Breast epithelium (tissue), 4 donors: ENCODE measurements at regions of chr4 and their contacts with region 1.

Region 1: DNA sequence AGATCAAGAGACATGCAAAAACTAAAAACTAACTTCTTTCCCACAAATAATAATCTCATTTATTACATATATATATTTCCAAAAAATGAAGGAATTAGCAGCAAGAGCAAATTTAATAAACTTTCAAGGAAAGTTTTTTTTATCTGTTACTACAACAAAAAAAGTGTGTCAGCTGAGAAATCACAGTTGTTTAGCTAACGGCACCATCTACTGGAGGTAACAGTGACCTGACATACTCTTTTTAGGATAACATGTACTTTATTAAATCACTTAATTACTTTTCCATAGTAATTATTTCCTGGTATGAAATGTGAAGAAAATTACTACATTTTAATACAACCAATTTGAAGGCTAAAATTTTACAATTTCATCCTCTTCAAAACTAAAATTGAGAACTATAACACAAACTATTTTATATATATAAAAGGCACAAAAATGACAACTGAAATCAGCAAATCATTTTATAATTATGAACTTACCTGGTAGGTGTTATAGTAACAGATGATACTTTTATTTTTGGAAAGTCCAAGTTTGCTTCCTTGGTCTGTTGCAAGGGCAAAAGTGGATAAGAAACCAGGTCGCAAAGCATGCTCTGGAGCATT is 9.1 kb downstream of the LAMTOR3 start:
- DNase-seq: no peak
- H3K4me3 ChIP-seq: no peak overlapping the region
- H3K27ac ChIP-seq: no peak overlapping the region
- H3K4me1 ChIP-seq: no peaks in the 10 kb centered on the region
- H3K27me3 ChIP-seq: no peaks in the 10 kb centered on the region
- CTCF ChIP-seq: peak in 1 of 3 donors; percentile 27
- POLR2A ChIP-seq: no peak

Region 2: DNA sequence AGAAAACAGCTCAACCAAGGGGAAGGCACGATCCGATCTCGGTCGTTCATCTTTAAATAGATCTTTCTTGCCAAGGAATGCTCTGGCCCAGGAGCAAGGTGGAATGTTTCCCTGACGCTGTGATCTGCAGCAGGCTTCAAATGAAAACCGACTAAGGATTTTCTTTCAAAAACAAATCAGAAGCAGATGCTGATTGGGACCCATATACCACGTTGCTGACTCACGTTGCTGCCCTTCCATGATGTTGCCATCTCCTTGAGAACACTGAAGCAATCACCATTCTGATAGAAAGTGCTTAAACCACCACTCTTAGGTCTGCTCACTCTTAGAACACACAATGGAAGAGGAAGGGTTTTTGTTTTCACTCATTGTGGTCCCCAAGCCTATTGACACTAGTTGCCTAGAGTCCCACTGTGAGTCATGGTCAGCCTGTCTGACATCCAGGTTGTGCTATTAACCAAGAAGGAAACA is 17.0 kb before region 1 on chr4:
- intact Hi-C with region 1: loop called (anchors 1 kb)
- DNase-seq: no peak
- H3K4me3 ChIP-seq: no peak overlapping the region
- H3K27ac ChIP-seq: no peak overlapping the region
- H3K4me1 ChIP-seq: no peaks in the 10 kb centered on the region
- H3K27me3 ChIP-seq: no peaks in the 10 kb centered on the region
- CTCF ChIP-seq: no peak
- POLR2A ChIP-seq: no peak

Region 3: GRCh38 chr4:99927566-99927965 is 42.4 kb after region 1 on chr4:
- intact Hi-C with region 1: loop called (anchors 2 kb)
- DNase-seq: no peak
- H3K4me3 ChIP-seq: no peak overlapping the region
- H3K27ac ChIP-seq: no peak overlapping the region
- H3K4me1 ChIP-seq: no peaks in the 10 kb centered on the region
- H3K27me3 ChIP-seq: no peaks in the 10 kb centered on the region
- CTCF ChIP-seq: no peak
- POLR2A ChIP-seq: no peak

Region 4: DNA sequence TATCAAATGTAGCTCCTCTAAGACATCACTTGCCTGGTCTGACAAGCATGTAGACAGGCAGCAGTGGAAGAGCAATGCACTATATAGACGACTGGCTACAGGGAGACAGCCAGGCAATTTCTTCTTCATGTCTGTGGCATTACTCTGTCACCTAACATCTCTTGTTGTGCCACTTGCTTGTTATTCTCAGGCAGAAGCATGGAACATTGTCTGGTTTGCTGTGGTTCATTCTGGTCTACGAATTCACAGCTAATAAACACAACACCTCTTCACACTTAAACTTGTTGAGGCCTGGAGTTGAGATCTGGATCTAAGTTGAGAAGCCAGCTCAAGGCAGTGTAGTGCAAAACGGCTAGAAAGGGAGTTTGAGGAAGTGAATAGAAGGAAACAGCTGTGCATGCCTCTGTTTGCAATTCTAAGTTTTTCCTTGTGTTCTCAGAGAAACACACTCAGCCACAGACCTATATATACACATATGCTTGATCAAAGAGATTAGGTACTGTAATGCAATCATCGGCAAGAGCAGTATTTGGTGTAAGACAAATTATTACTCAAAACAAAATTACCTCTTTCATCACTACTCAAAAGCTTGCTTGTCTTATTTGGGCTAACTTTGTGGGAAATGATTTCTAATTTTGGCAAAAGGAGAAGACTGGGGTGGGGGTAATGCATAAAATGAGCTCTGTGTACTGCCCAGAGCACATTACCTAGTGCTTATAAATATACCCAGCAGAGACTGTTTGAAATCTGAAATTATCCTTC is 1218.4 kb after region 1 on chr4:
- intact Hi-C with region 1: no loop called
- DNase-seq: no peak
- H3K4me3 ChIP-seq: no peak overlapping the region
- H3K27ac ChIP-seq: peak overlapping the region; percentile 30 to 54
- H3K4me1 ChIP-seq: peaks cover 3 to 6% of the 10 kb centered on the region in 2 donors
- H3K27me3 ChIP-seq: no peaks in the 10 kb centered on the region
- CTCF ChIP-seq: no peak
- POLR2A ChIP-seq: no peak